IMR-90 (cell line): ENCODE measurements at regions of chr18 and their contacts with region 1.

Region 1: DNA sequence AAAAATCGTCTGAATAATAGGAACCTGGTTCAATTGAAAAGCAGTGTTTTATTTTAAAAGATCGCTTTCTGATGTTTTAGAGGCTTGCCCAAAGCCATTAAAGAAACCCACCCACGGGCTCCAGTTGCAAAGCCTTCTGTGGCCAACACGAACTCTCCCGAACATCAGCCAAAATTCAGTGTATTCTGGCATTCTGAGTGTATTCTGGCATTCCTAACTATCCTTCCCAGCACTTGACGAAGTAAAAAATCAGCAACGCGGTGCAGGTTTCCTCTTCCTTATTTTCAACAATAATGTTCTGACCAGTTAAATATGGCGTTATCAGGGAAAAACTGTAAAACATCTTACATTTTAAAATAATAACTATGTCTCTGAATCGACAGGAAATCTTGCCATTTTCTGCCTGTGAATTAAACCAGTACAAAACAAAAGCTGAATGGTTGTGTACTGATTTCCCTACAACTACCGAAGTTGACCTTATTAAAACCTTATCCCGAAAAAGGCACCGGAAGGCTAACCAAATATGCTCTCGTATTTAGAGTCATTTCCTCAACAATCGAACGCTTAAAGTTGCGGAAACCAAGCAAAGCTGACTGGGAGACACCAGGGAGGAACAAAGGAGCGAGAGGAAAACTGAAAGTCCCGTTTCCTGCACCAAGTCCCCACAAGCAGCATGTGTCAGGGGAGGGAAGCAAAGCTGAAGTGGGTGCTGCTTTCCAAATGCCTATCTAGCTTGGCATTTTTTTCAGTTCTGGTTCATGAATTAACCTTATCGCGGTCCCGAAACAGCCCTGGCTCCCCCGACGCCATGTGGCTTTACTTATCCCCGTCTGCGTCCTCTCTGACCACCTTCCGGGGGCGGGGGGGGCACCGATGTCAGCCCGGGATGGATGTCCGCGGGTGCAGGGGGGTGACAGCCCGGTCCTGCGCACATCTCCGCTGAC is 44.3 kb downstream of the ZNF516 start:
- DNase-seq: peak; percentile 72
- ATAC-seq: peak; percentile 61
- H3K4me3 ChIP-seq: peak overlapping the region; percentile 49
- H3K27ac ChIP-seq: peak overlapping the region; percentile 83
- H3K4me1 ChIP-seq: peaks cover 43% of the 10 kb centered on the region
- H3K27me3 ChIP-seq: no peaks in the 10 kb centered on the region
- CTCF ChIP-seq: no peak
- POLR2A ChIP-seq: peak; percentile 66
- RAD21 ChIP-seq: no peak

Region 2: DNA sequence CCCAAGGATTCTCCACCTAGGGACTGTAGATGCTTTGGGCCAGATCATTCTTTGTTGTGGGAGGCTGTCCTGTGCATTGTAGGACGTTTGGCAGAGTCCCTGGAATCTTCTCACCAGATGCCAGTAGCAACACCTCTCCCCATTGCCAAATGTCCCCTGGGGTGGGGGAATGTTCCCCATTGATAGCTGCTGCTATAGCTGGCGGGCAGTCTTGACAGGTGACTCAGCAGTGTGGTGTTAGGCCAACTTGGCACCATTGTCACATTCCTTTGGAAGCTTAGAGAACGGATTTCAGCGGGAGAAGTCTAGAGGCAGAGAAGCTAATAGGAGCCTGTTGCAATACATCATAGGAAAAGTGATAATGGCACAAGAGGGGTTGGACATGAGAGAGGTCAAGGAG is 527.6 kb before region 1 on chr18:
- CTCF ChIA-PET with region 1: no interaction called
- POLR2A ChIA-PET with region 1: no interaction called
- dilution Hi-C with region 1: no loop called
- in situ Hi-C with region 1: no loop called
- intact Hi-C with region 1: no loop called
- DNase-seq: peak; percentile 1
- ATAC-seq: no peak
- H3K4me3 ChIP-seq: no peak overlapping the region
- H3K27ac ChIP-seq: no peak overlapping the region
- H3K4me1 ChIP-seq: no peaks in the 10 kb centered on the region
- H3K27me3 ChIP-seq: no peaks in the 10 kb centered on the region
- CTCF ChIP-seq: no peak
- POLR2A ChIP-seq: no peak
- RAD21 ChIP-seq: no peak

Region 3: DNA sequence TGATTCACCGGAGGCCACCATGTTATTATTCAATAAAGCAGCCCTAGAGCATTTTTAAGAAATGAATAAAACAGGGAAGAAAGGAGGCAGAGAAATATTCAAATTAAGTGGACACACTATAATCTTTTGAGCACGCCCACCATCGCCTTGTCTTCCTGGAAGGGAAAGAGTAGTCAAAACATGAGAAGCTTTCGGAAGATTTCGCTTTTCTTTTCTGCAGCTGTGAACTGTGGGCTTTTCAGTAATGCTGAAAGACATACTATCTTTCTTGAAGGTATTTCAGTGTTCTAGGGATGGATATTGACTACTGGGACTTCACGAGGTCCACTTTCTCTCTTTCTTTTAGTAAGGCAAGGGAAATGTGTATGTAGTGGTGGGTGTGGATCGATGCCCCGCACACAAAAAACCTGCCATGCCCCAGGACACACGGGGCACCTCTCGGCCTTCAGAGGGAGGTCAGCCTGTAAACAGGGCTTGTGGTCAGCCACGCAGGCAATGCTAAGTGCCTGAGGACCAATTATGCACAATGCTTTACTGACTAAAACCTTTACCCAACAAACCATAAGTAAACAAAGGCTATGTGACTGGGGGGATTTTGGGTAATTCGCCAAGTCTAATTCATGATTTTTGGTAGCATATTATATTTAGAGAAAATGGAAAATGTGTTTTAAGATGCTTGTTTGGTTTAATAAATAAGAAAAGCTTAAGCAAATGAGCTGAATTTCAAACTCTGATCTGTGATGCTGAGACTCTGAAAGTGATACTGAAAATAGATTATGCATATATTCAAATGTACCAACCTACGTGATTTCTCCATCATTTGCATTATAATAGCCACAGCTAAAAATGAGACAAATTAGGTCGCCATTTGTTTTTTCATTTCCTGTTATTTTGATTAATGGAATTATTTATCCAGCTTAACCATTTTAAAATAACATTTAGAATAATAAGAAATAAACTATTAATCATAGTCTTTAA is 86.2 kb before region 1 on chr18:
- CTCF ChIA-PET with region 1: no interaction called
- POLR2A ChIA-PET with region 1: no interaction called
- dilution Hi-C with region 1: no loop called
- in situ Hi-C with region 1: no loop called
- intact Hi-C with region 1: no loop called
- DNase-seq: no peak
- ATAC-seq: no peak
- H3K4me3 ChIP-seq: no peak overlapping the region
- H3K27ac ChIP-seq: no peak overlapping the region
- H3K4me1 ChIP-seq: peaks cover 15% of the 10 kb centered on the region
- H3K27me3 ChIP-seq: no peaks in the 10 kb centered on the region
- CTCF ChIP-seq: no peak
- POLR2A ChIP-seq: no peak
- RAD21 ChIP-seq: no peak

Region 4: DNA sequence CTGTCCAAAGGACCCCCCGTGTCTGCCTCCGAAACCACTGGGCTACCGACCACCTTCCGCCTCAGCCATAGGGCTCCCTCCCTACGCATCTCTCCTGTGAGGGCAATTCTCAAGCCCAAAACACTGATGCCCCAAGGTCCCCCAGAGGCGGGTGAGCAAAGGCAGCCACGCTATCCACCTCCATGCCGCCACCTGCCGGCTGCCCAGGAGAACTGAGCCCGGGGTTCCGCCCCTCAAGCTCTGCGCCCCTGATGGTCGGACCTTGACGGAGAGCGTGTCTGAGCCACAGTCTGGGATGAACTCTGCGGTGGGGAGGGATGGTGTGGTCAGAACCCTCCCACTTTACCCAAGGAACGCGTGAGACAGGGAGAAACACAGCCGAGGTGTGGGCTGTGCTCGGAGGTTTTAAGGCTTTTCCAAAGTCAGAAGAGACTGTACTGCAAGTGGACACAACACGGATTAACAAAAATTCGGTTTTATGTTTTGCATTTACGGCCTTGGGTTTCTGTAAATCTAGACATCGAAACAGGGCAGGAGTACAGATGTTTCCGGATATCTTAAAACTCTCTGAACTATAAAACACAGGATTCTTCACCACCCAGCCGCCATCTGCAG is 69.8 kb before region 1 on chr18:
- CTCF ChIA-PET with region 1: no interaction called
- POLR2A ChIA-PET with region 1: no interaction called
- dilution Hi-C with region 1: no loop called
- in situ Hi-C with region 1: no loop called
- intact Hi-C with region 1: no loop called
- DNase-seq: no peak
- ATAC-seq: no peak
- H3K4me3 ChIP-seq: no peak overlapping the region
- H3K27ac ChIP-seq: no peak overlapping the region
- H3K4me1 ChIP-seq: peaks cover 13% of the 10 kb centered on the region
- H3K27me3 ChIP-seq: no peaks in the 10 kb centered on the region
- CTCF ChIP-seq: peak; percentile 37
- POLR2A ChIP-seq: no peak
- RAD21 ChIP-seq: no peak

Region 5: GRCh38 chr18:76416911-76417310 is 33.8 kb before region 1 on chr18:
- CTCF ChIA-PET with region 1: no interaction called
- POLR2A ChIA-PET with region 1: no interaction called
- dilution Hi-C with region 1: no loop called
- in situ Hi-C with region 1: no loop called
- intact Hi-C with region 1: loop called (anchors 5 kb)
- DNase-seq: peak; percentile 61
- ATAC-seq: peak; percentile 59
- H3K4me3 ChIP-seq: no peak overlapping the region
- H3K27ac ChIP-seq: no peak overlapping the region
- H3K4me1 ChIP-seq: peaks cover 18% of the 10 kb centered on the region
- H3K27me3 ChIP-seq: no peaks in the 10 kb centered on the region
- CTCF ChIP-seq: no peak
- POLR2A ChIP-seq: no peak
- RAD21 ChIP-seq: no peak

Region 6: DNA sequence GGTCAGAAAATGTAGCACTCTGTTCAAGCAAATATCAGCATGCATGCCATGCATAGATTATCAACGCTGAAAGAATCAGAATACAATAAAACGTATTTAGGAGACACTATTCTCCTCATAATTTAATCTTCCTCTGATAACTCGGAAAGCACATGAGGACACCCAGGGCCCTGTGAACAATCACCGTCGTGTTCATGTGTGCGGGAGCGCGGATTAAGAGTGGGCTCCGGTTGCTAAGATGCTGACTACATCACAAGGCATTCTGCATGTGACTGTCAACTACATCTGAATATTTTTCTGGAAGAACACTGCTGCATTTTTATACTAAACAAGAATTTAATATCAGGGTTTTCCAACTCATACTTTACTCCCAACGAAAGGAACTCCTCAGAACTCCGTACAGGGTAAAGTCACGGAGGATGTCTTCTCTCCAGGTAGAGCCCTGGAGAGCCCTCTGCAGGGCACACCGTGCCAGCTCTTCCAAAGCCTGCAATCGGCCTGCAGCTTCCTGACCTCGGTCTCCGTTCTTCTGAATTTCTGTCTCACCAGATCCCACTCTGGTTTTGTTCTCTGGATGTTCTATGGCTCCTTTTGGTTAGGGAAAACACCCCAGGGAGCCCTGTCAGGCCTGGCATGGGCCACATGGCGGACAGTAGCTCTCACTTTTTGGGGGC is 15.3 kb before region 1 on chr18:
- CTCF ChIA-PET with region 1: no interaction called
- POLR2A ChIA-PET with region 1: no interaction called
- dilution Hi-C with region 1: no loop called
- in situ Hi-C with region 1: no loop called
- intact Hi-C with region 1: no loop called
- DNase-seq: no peak
- ATAC-seq: no peak
- H3K4me3 ChIP-seq: no peak overlapping the region
- H3K27ac ChIP-seq: no peak overlapping the region
- H3K4me1 ChIP-seq: peaks cover 4% of the 10 kb centered on the region
- H3K27me3 ChIP-seq: no peaks in the 10 kb centered on the region
- CTCF ChIP-seq: no peak
- POLR2A ChIP-seq: no peak
- RAD21 ChIP-seq: no peak